ENCODE measurements at regions of chr3 and their contacts with region 1.

Region 1: GRCh38 chr3:50575372-50575771 is 6.0 kb downstream of the HEMK1 start:
- DNase-seq: no peak
- ATAC-seq: no peak
- H3K4me3 ChIP-seq: no peak overlapping the region
- H3K27ac ChIP-seq: no peak overlapping the region; the same call in 2 of the 3 replicates
- H3K4me1 ChIP-seq: peaks cover 41 to 55% of the 10 kb centered on the region in 2 experiments; a peak in 4 of 5 replicates
- H3K27me3 ChIP-seq: no peaks in the 10 kb centered on the region
- CTCF ChIP-seq: no peak
- EP300 ChIP-seq: no peak
- POLR2A ChIP-seq: no peak
- RAD21 ChIP-seq: no peak

Region 2: DNA sequence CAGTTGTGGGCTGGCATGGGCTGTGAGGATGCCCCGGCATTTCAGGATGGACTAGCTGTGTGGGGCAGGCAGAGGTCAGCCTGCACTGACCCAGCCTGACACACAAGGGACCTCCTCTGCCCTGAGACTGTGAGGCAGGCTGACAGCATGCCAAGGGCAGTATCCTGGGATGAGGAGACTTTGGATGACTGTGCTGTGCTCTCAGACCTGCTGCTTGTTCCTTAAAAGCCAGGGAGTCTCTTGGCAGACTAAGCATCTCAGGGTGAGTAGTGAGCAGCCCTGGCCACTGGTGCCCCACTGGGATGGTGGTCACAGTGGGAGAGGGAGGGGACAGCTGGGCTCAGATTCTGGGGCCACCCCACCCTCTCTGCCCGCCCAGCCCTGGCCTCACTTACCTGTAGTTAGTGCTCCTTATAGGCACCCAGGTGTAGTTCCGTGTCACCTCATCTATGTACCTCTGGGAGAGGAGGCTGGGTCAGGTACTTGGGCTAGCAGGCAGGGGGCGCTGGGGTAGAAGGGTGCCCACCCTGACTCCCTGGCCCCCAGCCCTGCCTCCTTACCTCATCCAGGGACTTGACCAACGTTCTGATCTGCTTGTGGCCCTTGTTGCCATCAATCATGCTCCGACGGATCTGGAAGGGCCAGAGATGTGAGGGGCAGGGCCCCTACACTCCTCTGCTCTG is 200.0 kb before region 1 on chr3:
- CTCF ChIA-PET with region 1: no interaction called
- POLR2A ChIA-PET with region 1: no interaction called
- in situ Hi-C with region 1: no loop called
- intact Hi-C with region 1: no loop called
- DNase-seq: peak in 2 of 4 experiments; percentile 41
- ATAC-seq: peak; percentile 52; the same call in 2 of the 3 replicates
- H3K4me3 ChIP-seq: no peak overlapping the region
- H3K27ac ChIP-seq: no peak overlapping the region
- H3K4me1 ChIP-seq: peaks cover 12 to 38% of the 10 kb centered on the region in 2 experiments; a peak in 4 of 5 replicates
- H3K27me3 ChIP-seq: peaks cover 0 to 9% of the 10 kb centered on the region in 2 experiments; a peak in 1 of 5 replicates
- CTCF ChIP-seq: peak in 2 of 3 experiments; percentile 20 to 22; a peak in 1 of 6 replicates
- EP300 ChIP-seq: no peak
- POLR2A ChIP-seq: no peak
- RAD21 ChIP-seq: no peak

Region 3: GRCh38 chr3:50587806-50588758 is 12.7 kb after region 1 on chr3:
- CTCF ChIA-PET with region 1: no interaction called
- POLR2A ChIA-PET with region 1: interaction called, 9 read pairs
- in situ Hi-C with region 1: no loop called
- intact Hi-C with region 1: loop called (anchors 2 kb)
- DNase-seq: no peak
- ATAC-seq: no peak
- H3K4me3 ChIP-seq: no peak overlapping the region
- H3K27ac ChIP-seq: peak overlapping the region; percentile 93
- H3K4me1 ChIP-seq: peaks cover 49 to 52% of the 10 kb centered on the region in 2 experiments
- H3K27me3 ChIP-seq: no peaks in the 10 kb centered on the region
- CTCF ChIP-seq: no peak
- EP300 ChIP-seq: no peak
- POLR2A ChIP-seq: no peak
- RAD21 ChIP-seq: no peak

Region 4: DNA sequence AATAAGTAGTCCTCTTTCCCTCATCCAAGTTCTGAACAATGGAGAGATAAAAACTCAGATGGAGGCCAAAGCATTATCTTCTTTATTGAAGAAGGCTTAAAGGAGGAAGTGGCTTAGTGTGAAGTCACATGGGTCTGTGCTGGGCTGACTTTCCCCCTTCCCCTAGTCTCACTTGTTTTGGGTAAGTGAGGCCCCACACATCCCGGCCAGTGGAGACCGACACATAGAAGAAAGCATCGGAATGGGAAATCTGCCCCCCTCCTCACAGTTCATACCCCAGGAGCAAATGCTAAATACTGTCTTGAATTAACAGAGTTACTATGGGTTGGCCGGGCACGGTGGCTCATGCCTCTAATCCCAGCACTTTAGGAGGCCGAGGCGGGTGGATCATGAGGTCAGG is 90.3 kb after region 1 on chr3:
- CTCF ChIA-PET with region 1: no interaction called
- POLR2A ChIA-PET with region 1: no interaction called
- in situ Hi-C with region 1: no loop called
- intact Hi-C with region 1: no loop called
- DNase-seq: no peak
- ATAC-seq: no peak
- H3K4me3 ChIP-seq: no peak overlapping the region
- H3K27ac ChIP-seq: no peak overlapping the region
- H3K4me1 ChIP-seq: no peaks in the 10 kb centered on the region
- H3K27me3 ChIP-seq: peaks cover 2 to 5% of the 10 kb centered on the region in 2 experiments; a peak in 2 of 5 replicates
- CTCF ChIP-seq: no peak
- EP300 ChIP-seq: no peak
- POLR2A ChIP-seq: no peak
- RAD21 ChIP-seq: no peak

Measured in K562 (cell line).